Psoas muscle (tissue), 8 donors: ENCODE measurements at regions of chr13 and their contacts with region 1.

Region 1: GRCh38 chr13:32019612-32020233 is 11.9 kb upstream of the FRY start:
- DNase-seq: no peak
- ATAC-seq: peak in 3 of 4 donors; percentile 63 to 80 (median 73)
- H3K4me3 ChIP-seq: no peak overlapping the region
- H3K27ac ChIP-seq: no peak overlapping the region
- H3K4me1 ChIP-seq: peaks cover 3% of the 10 kb centered on the region
- H3K27me3 ChIP-seq: no peaks in the 10 kb centered on the region
- CTCF ChIP-seq: peak; percentile 65

Region 2: GRCh38 chr13:32060401-32060878 is 40.7 kb after region 1 on chr13:
- intact Hi-C with region 1: no loop called
- DNase-seq: peak in 1 of 2 donors; percentile 53
- ATAC-seq: peak; percentile 96 to 98 (median 97)
- H3K4me3 ChIP-seq: peak overlapping the region; percentile 62
- H3K27ac ChIP-seq: peak overlapping the region; percentile 86
- H3K4me1 ChIP-seq: peaks cover 54% of the 10 kb centered on the region
- H3K27me3 ChIP-seq: no peaks in the 10 kb centered on the region
- CTCF ChIP-seq: no peak

Region 3: GRCh38 chr13:32315238-32316027 is 295.7 kb after region 1 on chr13 and contains the starts of genes BRCA2 and ZAR1L:
- intact Hi-C with region 1: loop called (anchors 5 to 10 kb)
- DNase-seq: peak; percentile 89 to 94
- ATAC-seq: peak; percentile 98 to 100 (median 98)
- H3K4me3 ChIP-seq: peak within 1 kb of the TSS; percentile 73
- H3K27ac ChIP-seq: peak within 1 kb of the TSS; percentile 89
- H3K4me1 ChIP-seq: no peaks in the 10 kb centered on the region
- H3K27me3 ChIP-seq: no peaks in the 10 kb centered on the region
- CTCF ChIP-seq: no peak
- total RNA-seq, gene BRCA2: 0.11 to 0.34 (median 0.20) TPM
- total RNA-seq, gene ZAR1L: not detected

Region 4: GRCh38 chr13:32427852-32428580 is 408.3 kb after region 1 on chr13 and contains the start of gene N4BP2L1:
- intact Hi-C with region 1: no loop called
- DNase-seq: peak; percentile 71 to 83
- ATAC-seq: peak; percentile 53 to 65 (median 60)
- H3K4me3 ChIP-seq: peak within 1 kb of the TSS; percentile 84
- H3K27ac ChIP-seq: peak within 1 kb of the TSS; percentile 88
- H3K4me1 ChIP-seq: peaks cover 11% of the 10 kb centered on the region
- H3K27me3 ChIP-seq: no peaks in the 10 kb centered on the region
- CTCF ChIP-seq: no peak
- total RNA-seq, gene N4BP2L1: 2.7 to 7.3 (median 4.8) TPM